ENCODE measurements at regions of chr15 and their contacts with region 1.

Region 1: DNA sequence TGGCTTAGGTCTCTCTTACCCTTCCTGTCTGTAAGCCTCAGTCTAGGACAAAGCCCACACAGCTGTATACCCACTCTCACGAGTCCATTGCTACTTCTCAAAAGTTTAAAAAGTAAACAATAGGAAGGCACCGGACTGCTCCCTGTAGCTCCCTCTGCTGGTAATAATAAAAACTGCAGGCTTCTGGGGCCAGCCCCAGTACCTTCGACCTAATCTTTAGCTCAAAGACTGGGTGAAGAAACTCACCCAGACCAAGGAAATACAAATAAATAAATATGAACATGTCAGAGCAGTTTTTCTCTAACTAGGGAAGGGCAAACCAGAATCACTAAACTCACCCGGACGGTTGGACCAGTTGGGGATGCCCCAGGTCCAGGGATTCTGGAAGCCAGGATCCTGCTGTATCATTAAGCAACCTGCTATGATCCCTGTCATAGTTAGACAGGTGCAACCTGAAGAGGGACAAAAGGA is 5.0 kb downstream of the FAM219B start:
- DNase-seq: peak; percentile 75
- H3K4me3 ChIP-seq: no peak overlapping the region
- H3K27ac ChIP-seq: no peak overlapping the region
- H3K4me1 ChIP-seq: peaks cover 9% of the 10 kb centered on the region
- H3K27me3 ChIP-seq: no peaks in the 10 kb centered on the region
- CTCF ChIP-seq: peak; percentile 96

Region 2: GRCh38 chr15:74781431-74782258 is 120.0 kb before region 1 on chr15 and contains the start of gene CSK:
- intact Hi-C with region 1: loop called (anchors 5 kb)
- DNase-seq: peak; percentile 75
- H3K4me3 ChIP-seq: peak within 1 kb of the TSS; percentile 70
- H3K27ac ChIP-seq: peak within 1 kb of the TSS; percentile 81
- H3K4me1 ChIP-seq: peaks cover 26% of the 10 kb centered on the region
- H3K27me3 ChIP-seq: no peaks in the 10 kb centered on the region
- CTCF ChIP-seq: peak; percentile 39
- total RNA-seq, gene CSK: 64.3 to 126 TPM

Region 3: DNA sequence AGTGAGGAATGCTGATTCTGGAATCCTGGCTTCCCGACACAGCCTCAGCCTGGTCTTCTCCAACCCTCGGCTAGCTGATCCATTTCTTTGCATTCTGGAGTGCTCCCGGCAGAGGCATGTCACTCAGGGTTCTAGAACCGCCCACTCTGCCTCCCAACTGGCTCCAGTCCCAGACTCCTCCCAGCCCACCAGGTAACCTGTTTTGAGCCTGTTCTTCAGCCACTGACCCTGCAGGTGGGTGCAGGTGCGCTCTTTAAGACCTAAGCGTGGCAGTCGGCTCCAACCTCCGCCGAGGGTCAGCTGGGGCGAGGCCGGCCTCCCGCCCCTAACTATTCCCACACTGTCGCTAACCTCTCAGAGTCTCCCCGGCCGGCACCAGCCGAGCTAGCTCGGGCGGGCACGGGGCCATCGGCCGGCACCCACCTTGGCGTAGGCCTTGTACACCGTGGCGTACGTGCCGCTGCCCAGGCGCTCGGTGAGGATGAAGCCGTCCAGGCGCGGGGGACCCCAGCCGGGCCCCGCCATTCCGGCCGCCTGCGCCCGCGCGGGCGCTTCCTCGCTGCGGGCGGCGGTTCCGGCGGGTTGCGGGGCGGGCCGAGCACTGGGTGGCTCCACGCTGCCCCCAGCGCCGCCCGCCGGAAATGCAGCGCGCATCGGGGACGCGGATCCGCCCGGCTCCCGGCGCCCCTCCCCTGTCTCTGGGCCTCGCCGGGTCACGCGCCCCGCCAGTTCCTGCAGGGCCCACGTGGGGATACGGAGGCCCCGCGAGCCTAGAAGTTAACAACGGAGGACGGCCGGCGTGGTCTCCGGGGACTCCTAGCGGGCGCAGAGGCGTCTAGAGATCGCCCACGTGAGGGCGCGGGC is 58.8 kb before region 1 on chr15 and contains the start of gene ULK3:
- intact Hi-C with region 1: loop called (anchors 5 kb)
- DNase-seq: peak; percentile 92
- H3K4me3 ChIP-seq: peak within 1 kb of the TSS; percentile 90
- H3K27ac ChIP-seq: peak within 1 kb of the TSS; percentile 92
- H3K4me1 ChIP-seq: peaks cover 17% of the 10 kb centered on the region
- H3K27me3 ChIP-seq: no peaks in the 10 kb centered on the region
- CTCF ChIP-seq: peak; percentile 50
- total RNA-seq, gene ULK3: 45.6 to 50.7 TPM

Region 4: DNA sequence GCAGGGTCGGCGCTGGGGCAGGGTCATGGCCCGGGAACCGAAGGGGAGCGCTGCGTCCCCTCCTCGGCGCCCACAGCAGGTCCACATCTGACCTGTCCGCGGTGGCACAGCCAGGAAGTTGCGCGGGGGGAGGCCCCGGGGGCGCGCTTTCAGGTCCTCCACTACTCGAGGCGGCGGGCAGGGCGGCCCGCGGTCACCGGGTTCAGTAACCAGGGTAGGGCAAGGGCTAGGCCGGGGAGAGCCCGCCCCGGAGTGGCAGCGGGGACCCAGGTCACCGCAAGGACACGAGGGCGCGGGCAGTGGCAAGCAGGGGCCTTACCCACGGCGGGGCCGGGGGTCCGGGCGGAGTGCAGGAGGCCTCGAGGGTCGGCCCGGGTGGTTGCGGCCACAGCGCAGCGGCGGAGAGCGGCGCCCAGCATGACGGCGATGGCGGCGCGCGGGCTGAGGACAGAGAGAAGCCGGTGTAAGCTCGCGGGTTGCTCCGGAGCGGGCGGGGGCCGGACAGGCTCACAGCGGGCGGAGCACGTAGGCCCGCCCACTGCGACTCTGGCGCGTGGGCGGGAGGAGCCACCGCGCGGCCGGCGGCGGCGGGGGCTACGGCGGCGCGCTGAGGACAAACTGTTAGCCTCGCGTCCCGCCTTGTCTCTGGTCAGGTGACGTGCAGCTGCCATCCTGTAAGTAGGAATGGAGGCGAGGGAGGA is 36.1 kb after region 1 on chr15 and contains the start of gene COX5A:
- intact Hi-C with region 1: loop called (anchors 5 kb)
- DNase-seq: peak; percentile 93
- H3K4me3 ChIP-seq: peak within 1 kb of the TSS; percentile 72
- H3K27ac ChIP-seq: peak within 1 kb of the TSS; percentile 94
- H3K4me1 ChIP-seq: peaks cover 12% of the 10 kb centered on the region
- H3K27me3 ChIP-seq: no peaks in the 10 kb centered on the region
- CTCF ChIP-seq: no peak
- total RNA-seq, gene COX5A: 563 to 623 TPM

Region 5: GRCh38 chr15:74950078-74951000 is 48.7 kb after region 1 on chr15:
- intact Hi-C with region 1: loop called (anchors 5 kb)
- DNase-seq: peak; percentile 87
- H3K4me3 ChIP-seq: no peak overlapping the region
- H3K27ac ChIP-seq: no peak overlapping the region
- H3K4me1 ChIP-seq: peaks cover 3% of the 10 kb centered on the region
- H3K27me3 ChIP-seq: no peaks in the 10 kb centered on the region
- CTCF ChIP-seq: peak; percentile 96